OCI-LY7 (cell line): ENCODE measurements at regions of chr2 and their contacts with region 1.

Region 1: DNA sequence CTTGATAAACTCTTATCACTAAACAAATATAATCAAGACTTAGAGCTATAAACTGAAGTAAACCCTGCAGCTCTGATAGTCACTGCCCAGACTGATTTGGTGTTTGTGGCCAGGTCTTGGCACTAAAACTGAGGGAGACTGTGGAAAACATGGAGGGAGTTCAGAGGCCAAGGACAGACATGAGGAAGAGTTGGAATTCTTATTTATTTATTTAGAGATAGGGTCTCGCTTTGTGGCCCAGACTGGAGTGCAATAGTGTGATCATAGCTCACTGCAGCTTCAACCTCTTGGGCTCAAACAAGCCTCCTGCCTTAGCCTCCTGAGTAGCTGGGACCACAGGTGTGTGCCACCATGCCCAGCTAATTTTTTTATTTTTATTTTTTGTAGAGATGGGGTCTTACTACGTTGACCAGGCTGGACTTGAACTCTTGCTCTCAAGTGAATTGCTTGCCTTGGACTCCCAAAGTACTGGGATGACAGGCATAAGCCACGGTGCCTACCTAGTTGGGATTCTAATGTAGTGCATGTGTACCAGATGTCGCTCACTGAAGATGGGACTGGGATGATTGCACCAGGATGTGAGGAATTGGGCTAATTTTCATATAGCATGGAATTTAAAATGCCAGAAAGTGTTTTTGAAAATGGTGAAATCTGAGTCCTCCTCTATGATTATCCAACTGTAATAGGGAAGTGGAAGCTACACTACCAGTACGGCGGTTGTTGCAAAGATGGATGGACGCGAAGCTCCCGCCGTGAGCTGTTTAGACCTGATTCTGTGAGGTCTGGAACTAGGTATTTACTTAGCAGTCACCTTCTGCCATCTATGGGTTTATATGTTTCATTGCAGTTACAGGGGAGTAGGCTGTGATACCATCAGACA is 52.7 kb upstream of the CTLA4 start:
- DNase-seq: peak; percentile 89
- H3K4me3 ChIP-seq: peak overlapping the region; percentile 13
- H3K27ac ChIP-seq: no peak overlapping the region
- H3K4me1 ChIP-seq: peaks cover 35% of the 10 kb centered on the region
- CTCF ChIP-seq: peak; percentile 96

Region 2: DNA sequence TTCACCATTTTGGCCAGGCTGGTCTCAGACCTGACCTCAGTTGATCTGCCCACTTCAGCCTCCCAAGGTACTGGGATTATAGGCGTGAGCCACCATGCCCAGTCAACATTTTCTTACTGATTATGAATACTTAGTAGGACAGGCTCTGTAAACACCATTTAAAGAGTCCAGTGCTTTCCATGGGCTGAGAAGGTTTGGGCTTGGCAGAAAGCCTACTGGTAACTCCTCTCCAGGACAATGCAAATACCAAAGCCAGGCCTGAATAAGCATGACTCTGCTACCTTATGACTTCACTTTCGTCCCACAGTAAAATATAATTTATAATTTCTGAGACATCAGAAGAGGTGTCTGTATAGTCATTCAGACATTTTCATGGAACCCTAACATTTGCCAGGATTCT is 1240.4 kb before region 1 on chr2:
- CTCF ChIA-PET with region 1: no interaction called
- POLR2A ChIA-PET with region 1: no interaction called
- intact Hi-C with region 1: loop called (anchors 5 kb)
- DNase-seq: no peak
- H3K4me3 ChIP-seq: no peak overlapping the region
- H3K27ac ChIP-seq: no peak overlapping the region
- H3K4me1 ChIP-seq: no peaks in the 10 kb centered on the region
- CTCF ChIP-seq: no peak

Region 3: DNA sequence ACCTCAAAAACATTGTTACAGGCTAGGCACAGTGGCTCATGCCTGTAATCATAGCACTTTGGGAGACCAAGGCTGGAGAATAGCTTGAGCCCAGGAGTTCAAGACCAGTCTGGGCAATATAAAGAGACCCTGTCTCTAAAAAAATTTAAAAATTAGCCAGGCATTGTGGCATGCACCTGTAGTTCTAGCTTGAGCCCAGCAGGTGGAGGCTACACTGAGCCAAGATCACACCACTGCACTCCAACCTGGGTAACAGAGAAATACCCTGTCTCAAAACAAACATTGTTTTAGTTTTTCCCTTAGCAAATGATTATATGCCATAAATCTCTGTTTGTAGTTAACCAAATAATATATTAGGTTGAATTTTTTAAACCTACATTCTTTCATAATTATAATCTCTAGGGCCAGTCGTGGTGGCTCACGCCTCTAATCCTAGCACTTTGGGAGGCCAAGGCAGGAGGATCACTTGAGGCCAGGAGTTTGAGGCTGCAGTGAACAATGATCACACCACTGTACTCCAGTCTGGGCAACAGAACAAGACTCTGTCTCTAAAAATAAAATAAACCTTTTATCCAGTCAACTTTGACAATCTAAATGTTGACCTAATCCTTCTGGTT is 589.4 kb before region 1 on chr2:
- CTCF ChIA-PET with region 1: no interaction called
- POLR2A ChIA-PET with region 1: no interaction called
- intact Hi-C with region 1: loop called (anchors 2 kb)
- DNase-seq: peak; percentile 45
- H3K4me3 ChIP-seq: no peak overlapping the region
- H3K27ac ChIP-seq: no peak overlapping the region
- H3K4me1 ChIP-seq: no peaks in the 10 kb centered on the region
- CTCF ChIP-seq: peak; percentile 85

Region 4: GRCh38 chr2:203412546-203413331 is 402.2 kb before region 1 on chr2:
- CTCF ChIA-PET with region 1: no interaction called
- POLR2A ChIA-PET with region 1: no interaction called
- intact Hi-C with region 1: no loop called
- DNase-seq: no peak
- H3K4me3 ChIP-seq: no peak overlapping the region
- H3K27ac ChIP-seq: no peak overlapping the region
- H3K4me1 ChIP-seq: no peaks in the 10 kb centered on the region
- CTCF ChIP-seq: no peak

Region 5: DNA sequence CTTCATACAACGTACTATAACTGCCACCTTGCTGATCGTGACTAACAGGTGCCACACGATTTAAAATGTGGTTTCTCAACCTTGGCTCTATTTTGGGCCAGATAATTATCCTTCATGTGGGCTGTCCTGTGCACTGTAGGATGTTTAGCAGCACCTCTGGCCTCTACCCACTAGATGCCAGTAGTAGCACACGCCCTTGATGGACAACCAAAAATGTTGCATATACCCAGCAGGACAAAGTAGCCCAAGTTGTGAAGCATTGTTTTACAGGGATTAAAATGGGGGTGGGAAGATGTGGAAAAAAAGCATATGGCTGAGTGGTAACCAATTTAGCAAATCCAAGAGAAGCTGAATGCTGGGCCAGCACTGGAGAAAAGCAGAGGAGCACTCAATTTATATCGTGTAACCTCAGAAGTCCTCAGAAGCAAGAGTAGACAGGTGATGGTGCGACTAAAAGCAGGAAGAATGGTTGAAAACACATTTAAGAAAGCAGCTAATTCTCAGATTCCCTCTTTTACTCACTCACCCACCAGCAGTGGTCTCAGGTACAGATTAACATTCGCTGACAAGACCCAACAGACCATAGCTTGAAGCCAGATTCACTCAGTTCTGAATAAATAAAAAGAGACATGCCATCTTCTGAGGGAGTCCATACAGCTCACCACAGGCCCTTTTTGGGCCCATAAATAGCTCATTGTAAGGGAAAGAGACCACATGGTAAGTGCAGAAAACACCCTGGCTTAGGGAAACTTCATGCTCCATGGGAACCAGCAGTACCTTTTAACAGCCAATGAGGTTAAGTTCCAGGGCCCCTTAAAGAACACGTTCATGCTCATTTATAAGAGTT is 330.4 kb before region 1 on chr2:
- CTCF ChIA-PET with region 1: interaction called, 16 read pairs
- POLR2A ChIA-PET with region 1: interaction called, 5 read pairs
- intact Hi-C with region 1: loop called (anchors 1 kb)
- DNase-seq: peak; percentile 82
- H3K4me3 ChIP-seq: no peak overlapping the region
- H3K27ac ChIP-seq: peak overlapping the region; percentile 48
- H3K4me1 ChIP-seq: peaks cover 25% of the 10 kb centered on the region
- CTCF ChIP-seq: peak; percentile 99

Region 6: GRCh38 chr2:203683932-203684556 is 130.9 kb before region 1 on chr2:
- CTCF ChIA-PET with region 1: interaction called, 3 read pairs
- POLR2A ChIA-PET with region 1: interaction called, 5 read pairs
- intact Hi-C with region 1: loop called (anchors 10 kb)
- DNase-seq: no peak
- H3K4me3 ChIP-seq: no peak overlapping the region
- H3K27ac ChIP-seq: no peak overlapping the region
- H3K4me1 ChIP-seq: peaks cover 83% of the 10 kb centered on the region
- CTCF ChIP-seq: no peak

Region 7: DNA sequence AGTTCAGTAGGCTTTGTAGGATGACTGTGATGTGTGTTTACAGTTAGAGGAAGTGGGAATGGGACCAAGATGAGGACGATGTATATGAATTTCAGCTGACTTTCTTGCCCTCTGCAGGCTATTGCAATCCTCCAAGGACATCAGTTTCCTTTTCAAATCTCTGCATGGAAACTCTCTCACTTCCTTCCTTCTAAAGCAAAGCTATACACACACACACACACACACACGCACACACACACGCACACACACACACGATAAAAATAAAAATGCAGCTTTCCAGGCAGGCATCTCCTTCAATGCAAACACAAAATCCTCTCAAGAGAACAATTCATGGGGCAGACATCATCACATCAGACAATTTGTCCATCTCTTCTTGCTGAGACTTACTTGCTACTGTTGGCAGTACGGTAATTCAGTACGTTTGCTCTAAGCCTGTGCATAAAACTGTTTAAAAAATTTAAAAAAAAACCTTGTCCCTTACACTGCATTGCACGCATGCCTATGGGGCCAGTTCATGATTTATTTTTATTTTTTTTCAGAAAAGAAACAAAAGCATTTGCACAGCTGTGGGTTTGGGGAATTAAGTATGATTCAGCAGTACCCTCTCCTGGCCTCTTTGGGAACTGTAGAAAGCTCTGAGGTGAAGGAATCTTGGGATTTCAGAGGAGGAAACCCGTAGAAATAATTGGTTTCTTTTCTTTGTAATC is 94.5 kb after region 1 on chr2:
- CTCF ChIA-PET with region 1: no interaction called
- POLR2A ChIA-PET with region 1: no interaction called
- intact Hi-C with region 1: loop called (anchors 1 kb)
- DNase-seq: peak; percentile 42
- H3K4me3 ChIP-seq: no peak overlapping the region
- H3K27ac ChIP-seq: no peak overlapping the region
- H3K4me1 ChIP-seq: peaks cover 7% of the 10 kb centered on the region
- CTCF ChIP-seq: peak; percentile 93

Region 8: GRCh38 chr2:204030322-204030721 is 215.4 kb after region 1 on chr2:
- CTCF ChIA-PET with region 1: no interaction called
- POLR2A ChIA-PET with region 1: no interaction called
- intact Hi-C with region 1: no loop called
- DNase-seq: no peak
- H3K4me3 ChIP-seq: no peak overlapping the region
- H3K27ac ChIP-seq: no peak overlapping the region
- H3K4me1 ChIP-seq: peaks cover 22% of the 10 kb centered on the region
- CTCF ChIP-seq: no peak